Motor neuron (in vitro differentiated cells): ENCODE measurements at regions of chr6 and their contacts with region 1.

Region 1: DNA sequence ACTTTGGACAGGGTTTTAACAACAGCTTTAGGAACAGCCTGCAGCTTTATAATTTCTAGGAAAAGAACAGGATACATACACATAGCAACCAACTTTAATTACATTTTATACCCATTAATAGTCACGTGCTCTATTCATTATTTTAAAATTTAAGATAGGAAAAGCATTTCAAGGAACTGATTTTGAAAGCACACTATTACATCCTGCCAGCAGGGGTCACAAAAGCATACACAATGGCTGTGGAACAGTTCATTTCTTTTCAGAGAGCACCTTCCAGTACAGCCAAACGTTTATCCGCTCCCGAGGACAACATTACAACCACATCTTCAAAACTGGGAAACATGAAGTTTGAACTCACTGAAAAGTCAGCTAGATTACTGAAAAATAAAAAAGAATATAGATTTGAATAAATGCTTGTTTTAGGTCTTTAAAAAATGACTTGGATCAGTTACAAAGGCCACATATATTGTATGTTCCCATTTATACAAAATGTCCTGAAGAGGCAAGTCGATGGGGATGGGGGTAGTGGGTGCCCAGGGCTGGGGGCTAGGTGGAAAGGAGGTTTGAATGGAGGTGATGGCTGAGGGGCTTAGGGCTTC is 104.6 kb upstream of the EXOC2 start:
- ATAC-seq: peak in 4 of 8 experiments; percentile 49 to 70 (median 60)
- H3K4me3 ChIP-seq: no peak overlapping the region
- H3K27ac ChIP-seq: no peak overlapping the region
- H3K4me1 ChIP-seq: no peaks in the 10 kb centered on the region

Region 2: DNA sequence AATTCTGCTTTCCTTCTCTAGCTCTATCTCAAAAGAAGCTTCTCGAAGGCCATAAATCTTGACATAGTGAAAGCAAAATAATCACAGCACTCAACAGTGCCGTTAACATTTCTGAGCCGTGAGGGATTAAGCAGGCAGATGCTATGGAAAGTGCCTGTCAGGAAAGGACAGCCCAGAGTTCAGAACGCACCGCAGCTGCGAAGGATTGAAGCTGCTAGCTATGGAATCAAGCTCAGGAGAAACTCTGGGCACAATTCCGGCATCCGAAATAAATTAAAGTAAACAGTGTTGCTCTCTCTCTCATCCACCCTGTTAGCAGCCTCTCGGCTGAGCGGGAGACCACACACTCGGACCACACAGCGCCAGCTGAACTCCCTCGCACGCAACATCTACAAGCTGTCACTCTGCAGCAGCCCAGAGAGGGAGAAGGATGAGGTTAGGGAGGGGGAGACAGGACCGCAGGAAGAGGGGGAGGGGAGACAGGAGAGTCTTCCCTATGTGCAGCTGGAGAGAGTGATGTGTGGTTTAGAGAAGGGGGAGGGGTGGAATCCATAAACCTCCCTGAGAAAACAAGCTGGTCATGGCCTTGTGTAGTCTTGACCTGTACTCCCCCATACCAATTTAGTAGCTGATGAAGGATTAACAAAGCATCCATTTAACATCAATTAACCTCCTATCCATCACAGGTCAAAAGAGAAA is 113.7 kb before region 1 on chr6:
- in situ Hi-C with region 1: no loop called
- ATAC-seq: peak; percentile 76 to 98 (median 98)
- H3K4me3 ChIP-seq: peak overlapping the region; percentile 15 to 36 (median 23)
- H3K27ac ChIP-seq: peak overlapping the region; percentile 25 to 65
- H3K4me1 ChIP-seq: peaks cover 17 to 41% of the 10 kb centered on the region in 2 donors

Region 3: GRCh38 chr6:1079525-1079924 is 281.9 kb after region 1 on chr6:
- in situ Hi-C with region 1: no loop called
- ATAC-seq: no peak
- H3K4me3 ChIP-seq: no peak overlapping the region
- H3K27ac ChIP-seq: no peak overlapping the region
- H3K4me1 ChIP-seq: peaks cover 0 to 7% of the 10 kb centered on the region in 2 donors

Region 4: GRCh38 chr6:1136415-1136774 is 338.8 kb after region 1 on chr6:
- in situ Hi-C with region 1: no loop called
- ATAC-seq: peak in 3 of 8 experiments; percentile 24 to 67 (median 66)
- H3K4me3 ChIP-seq: no peak overlapping the region
- H3K27ac ChIP-seq: no peak overlapping the region
- H3K4me1 ChIP-seq: no peaks in the 10 kb centered on the region

Region 5: DNA sequence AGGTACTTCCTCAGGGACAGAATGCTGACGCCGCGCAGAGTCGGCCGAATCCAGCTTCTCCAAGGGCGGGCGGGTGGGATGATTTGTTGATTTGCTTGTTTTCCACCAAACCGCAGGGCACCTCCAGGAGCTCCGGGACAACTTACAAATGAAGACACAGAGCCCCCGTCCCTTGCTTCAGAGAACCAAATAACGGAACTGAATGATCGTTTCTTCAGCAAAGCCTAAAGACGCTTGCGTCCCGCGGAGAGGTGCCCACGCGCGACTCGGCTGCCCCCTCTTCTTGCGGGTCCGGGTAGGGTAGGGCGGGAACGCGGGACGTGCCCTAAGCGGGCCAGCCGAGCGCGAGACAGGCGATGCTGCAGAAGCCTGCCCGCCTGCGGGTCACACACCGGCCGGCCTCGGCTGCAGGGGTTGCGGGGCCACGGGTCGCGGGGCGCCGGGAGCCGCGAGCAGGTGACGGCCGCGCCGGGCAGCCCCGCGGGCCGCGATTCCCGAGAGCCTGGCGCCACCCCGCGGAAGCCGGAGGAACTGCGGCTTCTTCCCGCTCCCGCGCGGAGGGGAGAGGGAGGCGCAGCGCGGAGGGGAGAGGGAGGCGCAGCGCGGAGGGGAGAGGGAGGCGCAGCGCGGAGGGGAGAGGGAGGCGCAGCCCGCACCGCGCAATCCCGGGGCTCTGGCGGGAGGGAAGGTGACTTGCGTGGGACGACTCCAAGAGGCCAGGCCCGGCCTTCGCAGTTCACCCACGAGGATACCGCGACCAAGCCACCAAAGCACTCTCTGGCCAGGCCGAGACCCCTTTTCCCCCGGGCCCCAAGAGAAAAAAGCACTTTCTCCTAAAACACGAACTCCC is 584.1 kb after region 1 on chr6:
- in situ Hi-C with region 1: loop called in 4 of 9 experiments (anchors 10 to 25 kb)
- ATAC-seq: peak; percentile 89 to 98 (median 95)
- H3K4me3 ChIP-seq: peak overlapping the region in 4 of 5 donors; percentile 14 to 32 (median 24)
- H3K27ac ChIP-seq: no peak overlapping the region
- H3K4me1 ChIP-seq: peaks cover 2 to 5% of the 10 kb centered on the region in 2 donors

Region 6: GRCh38 chr6:1396952-1397868 is 599.6 kb after region 1 on chr6:
- in situ Hi-C with region 1: loop called in 3 of 9 experiments (anchors 25 kb)
- ATAC-seq: peak; percentile 44 to 89 (median 62)
- H3K4me3 ChIP-seq: no peak overlapping the region
- H3K27ac ChIP-seq: no peak overlapping the region
- H3K4me1 ChIP-seq: no peaks in the 10 kb centered on the region